K562 (cell line): ENCODE measurements at regions of chrX and their contacts with region 1.

Region 1: GRCh38 chrX:70030301-70030767 is 19.4 kb downstream of the AWAT2 start:
- DNase-seq: peak; percentile 47 to 65 (median 56)
- ATAC-seq: peak; percentile 82
- H3K4me3 ChIP-seq: no peak overlapping the region
- H3K27ac ChIP-seq: no peak overlapping the region
- H3K4me1 ChIP-seq: no peaks in the 10 kb centered on the region
- H3K27me3 ChIP-seq: no peaks in the 10 kb centered on the region
- CTCF ChIP-seq: peak; percentile 69 to 79 (median 72)
- EP300 ChIP-seq: no peak
- POLR2A ChIP-seq: no peak
- RAD21 ChIP-seq: peak; percentile 25 to 68

Region 2: GRCh38 chrX:69424161-69424560 is 606.2 kb before region 1 on chrX:
- CTCF ChIA-PET with region 1: interaction called, 3 read pairs
- POLR2A ChIA-PET with region 1: no interaction called
- in situ Hi-C with region 1: no loop called
- intact Hi-C with region 1: loop called (anchors 10 kb)
- DNase-seq: peak; percentile 6 to 10 (median 8)
- ATAC-seq: no peak
- H3K4me3 ChIP-seq: no peak overlapping the region
- H3K27ac ChIP-seq: no peak overlapping the region
- H3K4me1 ChIP-seq: no peaks in the 10 kb centered on the region
- H3K27me3 ChIP-seq: no peaks in the 10 kb centered on the region
- CTCF ChIP-seq: peak; percentile 15 to 48 (median 21); a peak in 3 of 6 replicates
- EP300 ChIP-seq: no peak
- POLR2A ChIP-seq: no peak
- RAD21 ChIP-seq: peak in 1 of 2 experiments; percentile 41; a peak in 2 of 4 replicates

Region 3: GRCh38 chrX:69493193-69493592 is 537.1 kb before region 1 on chrX:
- CTCF ChIA-PET with region 1: interaction called, 3 read pairs
- POLR2A ChIA-PET with region 1: no interaction called
- in situ Hi-C with region 1: no loop called
- intact Hi-C with region 1: loop called (anchors 5 kb)
- DNase-seq: peak; percentile 18 to 44 (median 32)
- ATAC-seq: peak; percentile 83
- H3K4me3 ChIP-seq: no peak overlapping the region
- H3K27ac ChIP-seq: no peak overlapping the region
- H3K4me1 ChIP-seq: no peaks in the 10 kb centered on the region; a peak in 1 of 5 replicates
- H3K27me3 ChIP-seq: no peaks in the 10 kb centered on the region
- CTCF ChIP-seq: peak; percentile 38 to 59 (median 48); a peak in 5 of 6 replicates
- EP300 ChIP-seq: no peak
- POLR2A ChIP-seq: no peak
- RAD21 ChIP-seq: peak in 1 of 2 experiments; percentile 52; a peak in 3 of 4 replicates

Region 4: GRCh38 chrX:69538321-69538876 is 491.9 kb before region 1 on chrX:
- CTCF ChIA-PET with region 1: no interaction called
- POLR2A ChIA-PET with region 1: no interaction called
- in situ Hi-C with region 1: loop called (anchors 25 kb)
- intact Hi-C with region 1: loop called (anchors 1 kb)
- DNase-seq: peak; percentile 63 to 77 (median 76)
- ATAC-seq: peak; percentile 100
- H3K4me3 ChIP-seq: no peak overlapping the region
- H3K27ac ChIP-seq: no peak overlapping the region
- H3K4me1 ChIP-seq: peaks cover 0 to 7% of the 10 kb centered on the region in 2 experiments; a peak in 2 of 5 replicates
- H3K27me3 ChIP-seq: peaks cover 0 to 4% of the 10 kb centered on the region in 2 experiments; a peak in 1 of 5 replicates
- CTCF ChIP-seq: peak; percentile 69 to 84 (median 74)
- EP300 ChIP-seq: no peak
- POLR2A ChIP-seq: no peak
- RAD21 ChIP-seq: peak; percentile 61 to 71

Region 5: DNA sequence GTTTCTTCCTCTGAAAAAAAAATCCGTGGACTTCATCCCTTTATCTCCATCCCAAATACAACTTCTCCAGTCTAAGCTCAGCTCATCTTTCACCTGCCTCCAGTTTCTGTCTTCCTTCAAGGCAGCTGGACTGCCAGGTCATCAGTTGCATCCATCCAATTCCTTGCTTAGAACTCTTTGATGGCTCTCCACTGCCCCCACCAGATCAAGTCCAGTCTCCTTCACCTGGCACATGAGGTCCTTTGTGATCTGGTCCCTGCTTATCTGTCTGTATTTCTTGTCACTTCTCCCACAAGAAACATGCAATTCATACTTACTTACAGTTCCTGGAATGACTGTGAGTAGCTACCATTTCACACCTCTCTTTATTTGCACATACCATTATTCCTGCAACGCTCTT is 65.7 kb after region 1 on chrX:
- CTCF ChIA-PET with region 1: interaction called, 3 read pairs
- POLR2A ChIA-PET with region 1: no interaction called
- in situ Hi-C with region 1: loop called (anchors 5 kb)
- intact Hi-C with region 1: loop called (anchors 1 kb)
- DNase-seq: peak; percentile 11 to 21 (median 14)
- ATAC-seq: peak; percentile 72
- H3K4me3 ChIP-seq: no peak overlapping the region
- H3K27ac ChIP-seq: no peak overlapping the region
- H3K4me1 ChIP-seq: no peaks in the 10 kb centered on the region; a peak in 1 of 5 replicates
- H3K27me3 ChIP-seq: no peaks in the 10 kb centered on the region
- CTCF ChIP-seq: peak; percentile 28 to 30 (median 29); a peak in 3 of 6 replicates
- EP300 ChIP-seq: no peak
- POLR2A ChIP-seq: no peak
- RAD21 ChIP-seq: peak in 1 of 2 experiments; percentile 29; a peak in 1 of 4 replicates

Region 6: GRCh38 chrX:70433848-70434351 is 403.6 kb after region 1 on chrX:
- CTCF ChIA-PET with region 1: no interaction called
- POLR2A ChIA-PET with region 1: no interaction called
- in situ Hi-C with region 1: no loop called
- intact Hi-C with region 1: loop called (anchors 10 kb)
- DNase-seq: peak; percentile 79 to 84 (median 80)
- ATAC-seq: peak; percentile 89
- H3K4me3 ChIP-seq: peak overlapping the region; percentile 75
- H3K27ac ChIP-seq: peak overlapping the region; percentile 79
- H3K4me1 ChIP-seq: peaks cover 12 to 16% of the 10 kb centered on the region in 2 experiments; a peak in 4 of 5 replicates
- H3K27me3 ChIP-seq: peaks cover 2 to 11% of the 10 kb centered on the region in 2 experiments; a peak in 2 of 5 replicates
- CTCF ChIP-seq: peak; percentile 77 to 81 (median 81)
- EP300 ChIP-seq: no peak
- POLR2A ChIP-seq: peak; percentile 55
- RAD21 ChIP-seq: peak; percentile 43 to 64